Right cardiac atrium (tissue), 5 donors: ENCODE measurements at regions of chr3 and their contacts with region 1.

Region 1: GRCh38 chr3:170499565-170500156 is 81.0 kb downstream of the CLDN11 start:
- DNase-seq: peak in 2 of 3 donors; percentile 52 to 63
- ATAC-seq: peak; percentile 50 to 67
- H3K4me3 ChIP-seq: no peak overlapping the region
- H3K27ac ChIP-seq: no peak overlapping the region
- H3K4me1 ChIP-seq: no peaks in the 10 kb centered on the region
- H3K27me3 ChIP-seq: no peaks in the 10 kb centered on the region

Region 2: DNA sequence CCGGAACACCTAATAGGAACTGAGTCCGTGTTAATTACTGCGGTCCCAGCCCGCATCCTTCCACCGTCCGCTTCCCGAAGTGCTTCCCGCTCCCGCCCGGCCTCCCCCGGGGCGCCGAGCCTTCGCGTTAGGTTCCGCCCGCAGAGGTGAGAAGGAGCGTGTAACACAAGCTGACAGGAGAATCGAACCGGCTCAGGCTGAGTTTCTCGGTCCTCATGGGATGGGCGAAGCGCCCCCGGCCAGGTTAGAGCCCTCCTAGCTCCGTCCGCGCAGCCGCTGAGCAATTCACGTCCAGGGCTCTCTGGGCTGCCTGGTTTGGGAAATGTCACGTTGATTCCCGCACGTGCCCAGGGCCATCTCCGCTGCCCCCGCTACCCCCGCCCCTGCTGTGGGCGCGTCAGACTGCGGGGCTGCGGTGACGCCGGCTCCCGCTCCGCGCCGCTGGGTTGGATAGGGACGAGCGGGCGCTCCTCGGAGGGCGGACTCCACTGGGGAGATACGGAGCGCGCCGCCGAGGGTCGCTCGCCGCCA is 80.0 kb before region 1 on chr3:
- intact Hi-C with region 1: loop called in 1 of 4 experiments (anchors 10 kb)
- DNase-seq: peak; percentile 58 to 82 (median 73)
- ATAC-seq: peak; percentile 75 to 76
- H3K4me3 ChIP-seq: peak overlapping the region; percentile 49
- H3K27ac ChIP-seq: peak overlapping the region; percentile 85
- H3K4me1 ChIP-seq: no peaks in the 10 kb centered on the region
- H3K27me3 ChIP-seq: no peaks in the 10 kb centered on the region

Region 3: DNA sequence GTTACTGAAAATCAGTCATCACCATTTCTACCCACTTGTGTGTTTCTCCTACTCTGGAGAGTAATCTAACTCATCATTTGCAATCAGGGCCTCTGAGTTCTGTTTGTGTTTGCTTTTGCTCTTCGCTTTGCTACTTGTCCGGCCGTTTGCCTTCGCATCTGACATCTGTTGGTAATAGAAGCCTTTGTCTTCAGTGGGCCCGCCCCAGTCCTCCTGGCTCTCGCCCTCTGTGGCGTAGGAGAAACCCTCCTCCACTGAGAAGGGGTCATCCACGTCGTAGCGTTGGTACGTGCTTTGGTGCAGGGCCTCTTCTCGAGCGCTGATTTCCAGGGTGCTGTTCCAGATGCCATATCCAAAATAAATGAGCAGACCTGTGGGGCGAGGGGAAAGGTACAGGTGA is 32.7 kb before region 1 on chr3:
- intact Hi-C with region 1: no loop called
- DNase-seq: peak in 1 of 3 donors; percentile 27
- ATAC-seq: no peak
- H3K4me3 ChIP-seq: no peak overlapping the region
- H3K27ac ChIP-seq: no peak overlapping the region
- H3K4me1 ChIP-seq: no peaks in the 10 kb centered on the region
- H3K27me3 ChIP-seq: no peaks in the 10 kb centered on the region